Heart right ventricle (tissue), 16 donors: ENCODE measurements at regions of chr5 and their contacts with region 1.

Region 1: DNA sequence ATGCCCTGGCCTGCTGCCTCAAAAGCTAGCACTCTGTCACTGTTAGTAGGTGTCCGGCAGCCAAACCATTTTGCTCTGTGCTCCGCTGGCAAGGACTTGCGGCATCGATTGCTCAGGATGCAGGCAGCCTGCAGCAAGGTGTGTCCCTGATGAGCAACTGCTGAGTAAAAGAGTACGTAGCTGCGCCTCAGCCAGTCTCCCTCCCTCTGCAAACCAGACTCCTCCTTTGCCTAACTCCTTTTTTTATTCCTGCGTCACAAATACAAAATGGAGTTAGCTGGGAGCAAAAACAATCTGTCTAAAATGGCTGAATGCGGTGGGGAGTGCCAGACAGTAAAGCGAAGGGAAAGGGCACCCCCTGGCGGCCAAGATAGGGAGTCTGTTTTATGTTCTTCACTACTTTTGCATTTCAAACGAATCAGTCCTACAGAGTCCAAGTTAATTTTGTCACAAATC is 61.1 kb downstream of the DIAPH1 start:
- DNase-seq: peak; percentile 83 to 91
- ATAC-seq: peak; percentile 81 to 90 (median 88)
- H3K4me3 ChIP-seq: peak overlapping the region in 8 of 10 donors; percentile 4 to 45 (median 33)
- H3K27ac ChIP-seq: peak overlapping the region; percentile 58 to 95 (median 87)
- H3K4me1 ChIP-seq: peaks cover 6 to 50% (median 40%) of the 10 kb centered on the region in 9 donors
- H3K27me3 ChIP-seq: no peaks in the 10 kb centered on the region
- CTCF ChIP-seq: peak; percentile 83 to 95 (median 90)

Region 2: GRCh38 chr5:140821375-140822280 is 736.1 kb before region 1 on chr5 and contains the start of gene PCDHA5:
- intact Hi-C with region 1: no loop called
- DNase-seq: no peak
- ATAC-seq: no peak
- H3K4me3 ChIP-seq: peak within 1 kb of the TSS in 1 of 10 donors; percentile 15
- H3K27ac ChIP-seq: no peak within 1 kb of the TSS
- H3K4me1 ChIP-seq: no peaks in the 10 kb centered on the region
- H3K27me3 ChIP-seq: peaks cover 0 to 73% (median 36%) of the 10 kb centered on the region in 7 donors
- CTCF ChIP-seq: peak in 6 of 9 donors; percentile 32 to 51 (median 38)
- total RNA-seq, gene PCDHA5: 0.07 to 0.11 (median 0.08) TPM in 4 of 10 donors, not detected in the others

Region 3: GRCh38 chr5:141320225-141321169 is 237.2 kb before region 1 on chr5 and contains the start of gene TAF7:
- intact Hi-C with region 1: loop called in 7 of 10 experiments (anchors 2 to 10 kb)
- DNase-seq: peak; percentile 90 to 93
- ATAC-seq: peak; percentile 99 to 100 (median 100)
- H3K4me3 ChIP-seq: peak within 1 kb of the TSS; percentile 56 to 96 (median 72)
- H3K27ac ChIP-seq: peak within 1 kb of the TSS; percentile 87 to 99 (median 92)
- H3K4me1 ChIP-seq: peaks cover 0 to 23% (median 13%) of the 10 kb centered on the region in 9 donors
- H3K27me3 ChIP-seq: no peaks in the 10 kb centered on the region
- CTCF ChIP-seq: peak; percentile 79 to 92 (median 87)
- total RNA-seq, gene TAF7: 93.4 to 111 (median 107) TPM

Region 4: DNA sequence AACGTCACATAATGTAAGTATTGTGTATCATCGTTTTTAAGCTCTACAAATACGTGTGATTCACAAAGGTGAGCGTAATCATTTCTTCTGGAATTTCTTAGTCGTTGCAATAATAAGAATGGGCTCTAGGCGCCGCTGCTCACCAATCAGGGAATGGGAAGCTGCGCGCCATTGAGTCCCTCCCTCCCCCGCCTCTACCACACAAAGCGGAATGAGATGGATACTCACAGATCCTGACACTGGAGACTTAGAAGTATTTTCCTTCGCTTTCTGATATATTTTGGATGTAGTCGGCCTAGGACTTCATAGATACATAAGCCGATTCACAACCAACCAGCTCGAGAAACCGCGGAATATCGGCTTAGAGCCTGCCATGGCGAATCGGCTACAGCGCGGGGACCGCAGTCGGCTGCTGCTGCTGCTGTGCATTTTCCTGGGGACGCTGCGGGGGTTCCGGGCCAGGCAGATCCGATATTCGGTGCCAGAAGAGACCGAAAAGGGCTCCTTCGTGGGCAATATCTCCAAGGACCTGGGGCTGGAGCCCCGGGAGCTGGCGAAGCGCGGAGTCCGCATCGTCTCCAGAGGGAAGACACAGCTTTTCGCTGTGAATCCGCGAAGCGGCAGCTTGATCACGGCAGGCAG is 136.7 kb before region 1 on chr5 and contains the start of gene PCDHGA11:
- intact Hi-C with region 1: loop called in 8 of 10 experiments (anchors 2 to 10 kb)
- DNase-seq: no peak
- ATAC-seq: peak in 4 of 8 donors; percentile 34 to 60 (median 42)
- H3K4me3 ChIP-seq: peak within 1 kb of the TSS in 9 of 10 donors; percentile 6 to 42 (median 34)
- H3K27ac ChIP-seq: no peak within 1 kb of the TSS
- H3K4me1 ChIP-seq: peaks cover 0 to 25% (median 6%) of the 10 kb centered on the region in 9 donors
- H3K27me3 ChIP-seq: peaks cover 0 to 99% (median 0%) of the 10 kb centered on the region in 7 donors
- CTCF ChIP-seq: peak; percentile 23 to 60 (median 49)
- total RNA-seq, gene PCDHGA11: 3.3 to 8.5 (median 5.4) TPM

Region 5: DNA sequence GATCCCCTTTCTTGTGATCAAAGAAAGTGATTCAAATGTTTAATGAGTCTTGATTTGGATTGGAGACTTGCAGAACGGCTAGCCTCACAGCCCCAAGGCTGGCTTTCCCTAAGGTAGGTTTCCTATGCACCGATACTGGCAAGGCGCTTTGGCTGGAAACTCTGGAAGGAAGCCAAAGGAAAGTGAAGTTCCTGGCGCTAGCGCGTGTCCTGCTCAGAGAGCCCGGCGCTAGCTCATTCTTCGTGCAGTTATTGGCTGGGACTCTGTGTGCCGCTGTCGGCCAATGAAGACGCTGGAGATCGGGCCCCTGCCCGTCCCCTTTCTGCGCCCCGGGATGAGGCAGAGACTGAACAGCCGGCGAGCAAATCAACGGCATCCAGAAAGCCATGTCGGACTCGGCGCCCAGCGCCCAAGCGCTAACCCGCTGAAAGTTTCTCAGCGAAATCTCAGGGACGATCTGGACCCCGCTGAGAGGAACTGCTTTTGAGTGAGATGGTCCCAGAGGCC is 82.0 kb before region 1 on chr5 and contains the start of gene PCDHGC3:
- intact Hi-C with region 1: loop called in 1 of 10 experiments (anchors 2 kb)
- DNase-seq: peak; percentile 88 to 94
- ATAC-seq: peak; percentile 96 to 99 (median 99)
- H3K4me3 ChIP-seq: peak within 1 kb of the TSS; percentile 51 to 80 (median 62)
- H3K27ac ChIP-seq: peak within 1 kb of the TSS; percentile 67 to 93 (median 87)
- H3K4me1 ChIP-seq: peaks cover 7 to 55% (median 43%) of the 10 kb centered on the region in 9 donors
- H3K27me3 ChIP-seq: peaks cover 0 to 51% (median 0%) of the 10 kb centered on the region in 7 donors
- CTCF ChIP-seq: peak in 6 of 9 donors; percentile 52 to 68 (median 60)
- total RNA-seq, gene PCDHGC3: 12.8 to 19.5 (median 15.9) TPM

Region 6: GRCh38 chr5:141605523-141606277 is 48.0 kb after region 1 on chr5:
- intact Hi-C with region 1: no loop called
- DNase-seq: peak in 1 of 2 donors; percentile 65
- ATAC-seq: peak; percentile 68 to 89 (median 84)
- H3K4me3 ChIP-seq: peak overlapping the region in 1 of 10 donors; percentile 28
- H3K27ac ChIP-seq: peak overlapping the region; percentile 5 to 88 (median 75)
- H3K4me1 ChIP-seq: peaks cover 2 to 97% (median 44%) of the 10 kb centered on the region in 9 donors
- H3K27me3 ChIP-seq: no peaks in the 10 kb centered on the region
- CTCF ChIP-seq: no peak